ENCODE measurements at regions of chr11 and their contacts with region 1.

Region 1: DNA sequence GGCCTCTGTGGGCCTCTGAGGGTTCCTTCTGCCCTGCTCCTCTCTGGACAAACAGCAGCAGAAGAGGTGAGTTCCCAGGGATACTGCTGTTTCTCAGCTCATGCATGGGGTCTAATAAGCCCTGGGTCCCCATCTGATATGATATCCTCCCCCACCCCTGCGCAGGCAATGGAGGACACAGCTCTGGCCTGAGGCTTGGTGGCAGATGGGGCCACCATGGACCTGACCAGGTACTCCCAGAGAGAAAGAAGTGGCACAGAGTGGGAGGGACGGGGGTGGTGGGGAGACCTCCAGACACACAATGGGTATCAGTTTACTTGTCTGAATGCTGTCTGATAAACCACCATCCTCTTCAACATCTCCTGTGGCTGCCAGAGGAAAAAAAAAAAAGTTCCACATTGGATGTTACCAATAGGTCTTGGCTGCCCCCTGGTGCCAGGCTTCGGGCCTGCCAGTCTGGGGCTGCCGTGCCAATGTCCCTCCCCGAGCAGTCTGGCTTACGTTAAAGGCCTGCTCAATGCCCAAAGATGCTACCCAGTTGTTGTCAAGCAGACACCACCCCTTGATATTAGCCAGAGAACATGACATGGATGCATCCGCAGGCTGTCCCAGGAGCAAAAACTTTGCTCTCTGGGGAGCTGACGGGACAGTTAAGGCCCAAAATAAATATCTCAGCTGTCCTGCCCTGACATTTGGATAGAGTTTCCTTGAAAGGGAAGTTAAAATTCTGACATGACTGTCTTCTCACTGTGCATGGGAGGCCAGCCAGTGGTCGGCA is 27.9 kb upstream of the ABCC8 start:
- DNase-seq: peak; percentile 57
- ATAC-seq: peak; percentile 66
- H3K4me3 Mint-ChIP-seq: no peak overlapping the region
- H3K27ac Mint-ChIP-seq: no peak overlapping the region
- H3K4me1 Mint-ChIP-seq: no peaks in the 10 kb centered on the region
- H3K27me3 Mint-ChIP-seq: peaks cover 5% of the 10 kb centered on the region
- CTCF ChIP-seq: no peak

Region 2: GRCh38 chr11:16785520-16786128 is 718.9 kb before region 1 on chr11:
- CTCF ChIA-PET with region 1: no interaction called
- POLR2A ChIA-PET with region 1: no interaction called
- intact Hi-C with region 1: loop called (anchors 1 kb)
- DNase-seq: no peak
- ATAC-seq: peak; percentile 85
- H3K4me3 Mint-ChIP-seq: no peak overlapping the region
- H3K27ac Mint-ChIP-seq: no peak overlapping the region
- H3K4me1 Mint-ChIP-seq: no peaks in the 10 kb centered on the region
- H3K27me3 Mint-ChIP-seq: no peaks in the 10 kb centered on the region
- CTCF ChIP-seq: peak; percentile 16